ENCODE measurements at regions of chr1 and their contacts with region 1.

Region 1: DNA sequence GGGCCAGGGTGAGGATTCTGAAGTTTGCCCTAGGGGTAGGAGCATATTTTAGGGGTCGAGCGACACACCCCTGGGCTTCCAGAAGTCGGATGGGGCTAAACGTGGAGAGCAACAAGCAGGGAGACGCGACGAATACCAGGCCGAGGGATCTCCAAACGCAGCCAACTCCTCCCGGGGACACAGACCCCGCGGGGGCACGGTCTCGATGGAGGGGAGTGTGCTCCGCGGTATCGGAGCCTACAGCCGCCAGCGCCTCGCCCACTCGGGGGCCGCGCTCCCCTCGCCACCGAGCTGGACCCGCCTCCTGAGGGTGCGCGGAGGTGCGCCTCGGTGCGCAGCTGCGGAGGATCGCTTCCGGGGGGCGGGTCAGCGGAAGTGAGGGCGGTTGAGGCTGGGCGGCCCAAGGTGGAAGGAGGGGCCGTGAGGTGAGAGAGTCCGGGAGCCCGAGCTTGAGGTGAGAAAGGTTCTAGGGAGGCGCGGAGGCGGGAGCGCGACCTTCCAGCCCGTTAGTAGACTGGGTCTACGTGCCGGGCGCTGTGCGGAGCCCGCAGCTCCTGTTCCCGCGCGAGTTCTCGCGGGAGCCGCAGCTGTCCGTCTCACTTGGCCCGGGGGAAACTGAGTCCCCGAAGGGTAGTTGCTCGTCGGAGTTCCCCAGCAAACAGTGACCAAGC is at the start of gene MTFR1L:
- DNase-seq: peak; percentile 75 to 94 (median 85)
- H3K4me3 ChIP-seq: peak within 1 kb of the TSS; percentile 72 to 99 (median 95)
- H3K27ac ChIP-seq: peak within 1 kb of the TSS; percentile 52 to 98 (median 89)
- H3K27me3 ChIP-seq: no peaks in the 10 kb centered on the region
- CTCF ChIP-seq: peak in 17 of 56 donors; percentile 10 to 50 (median 26)
- total RNA-seq, gene MTFR1L: 66.5 to 116 (median 93.9) TPM

Region 2: DNA sequence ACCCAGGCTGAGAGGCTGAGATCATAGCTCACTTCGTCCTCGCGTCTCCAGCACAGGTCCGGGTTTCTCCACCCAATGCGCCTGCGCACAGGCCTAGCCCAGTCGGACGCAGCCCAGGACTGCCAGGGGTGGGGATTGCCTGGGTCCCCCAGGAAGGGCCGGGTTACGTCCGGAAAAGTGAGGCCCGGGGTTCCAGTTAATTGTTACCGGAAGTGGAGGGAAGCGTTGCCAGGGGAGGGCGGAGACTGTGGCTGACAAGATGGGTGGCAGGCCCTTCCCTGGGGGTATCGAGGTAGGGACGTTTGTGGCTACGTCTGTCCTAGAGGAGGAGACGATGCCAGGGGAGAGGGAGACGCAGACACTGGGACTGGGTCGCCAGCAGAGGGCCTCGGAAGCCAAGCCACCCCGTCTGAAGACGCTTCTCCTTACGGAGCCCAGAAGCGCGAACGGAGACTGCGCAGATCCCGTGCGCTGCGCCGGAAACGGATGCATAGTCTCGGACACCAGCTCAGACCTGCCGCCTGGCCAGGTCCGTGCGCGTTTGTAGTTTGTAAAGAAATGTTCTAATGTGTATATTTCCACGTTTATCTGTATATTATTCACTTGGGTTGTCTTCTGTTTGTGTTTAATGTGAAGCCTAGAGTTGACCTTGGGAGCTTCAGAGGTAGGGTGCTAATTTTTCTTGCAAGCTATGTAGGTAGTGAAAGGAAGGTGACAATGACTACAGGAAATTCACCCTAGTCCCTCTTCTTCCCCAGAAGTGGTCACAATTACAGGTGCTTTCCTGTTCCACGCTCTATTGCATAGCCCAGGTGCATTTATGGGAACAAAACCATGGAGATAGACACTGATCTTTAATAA is 579.8 kb before region 1 on chr1:
- intact Hi-C with region 1: loop called in 1 of 2 experiments (anchors 10 kb)
- DNase-seq: peak; percentile 79 to 92 (median 90)
- H3K4me3 ChIP-seq: peak overlapping the region; percentile 28 to 77 (median 59)
- H3K27ac ChIP-seq: peak overlapping the region; percentile 58 to 97 (median 90)
- H3K27me3 ChIP-seq: no peaks in the 10 kb centered on the region
- CTCF ChIP-seq: peak; percentile 39 to 86 (median 77)

Region 3: DNA sequence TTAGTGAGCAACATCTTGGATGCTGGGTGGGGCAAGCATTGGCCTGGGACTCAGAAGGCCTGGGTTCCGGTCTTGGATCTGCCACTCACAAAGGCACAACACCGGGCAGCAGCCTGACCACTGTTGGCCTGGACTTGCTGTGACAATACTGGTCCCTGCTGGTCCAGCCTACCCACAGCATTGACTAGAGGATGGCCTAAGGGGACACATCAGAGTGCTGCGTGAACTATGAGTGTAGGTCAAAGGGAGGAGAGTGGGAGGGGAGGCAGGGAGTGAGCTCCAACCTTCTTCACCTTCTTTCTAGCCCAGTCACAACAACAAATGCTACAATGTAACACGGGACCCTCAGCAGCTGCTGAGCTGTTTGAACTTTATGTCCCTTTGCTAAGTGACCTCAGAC is 450.5 kb before region 1 on chr1:
- intact Hi-C with region 1: no loop called
- DNase-seq: no peak
- H3K4me3 ChIP-seq: no peak overlapping the region
- H3K27ac ChIP-seq: no peak overlapping the region
- H3K27me3 ChIP-seq: no peaks in the 10 kb centered on the region
- CTCF ChIP-seq: no peak

Region 4: DNA sequence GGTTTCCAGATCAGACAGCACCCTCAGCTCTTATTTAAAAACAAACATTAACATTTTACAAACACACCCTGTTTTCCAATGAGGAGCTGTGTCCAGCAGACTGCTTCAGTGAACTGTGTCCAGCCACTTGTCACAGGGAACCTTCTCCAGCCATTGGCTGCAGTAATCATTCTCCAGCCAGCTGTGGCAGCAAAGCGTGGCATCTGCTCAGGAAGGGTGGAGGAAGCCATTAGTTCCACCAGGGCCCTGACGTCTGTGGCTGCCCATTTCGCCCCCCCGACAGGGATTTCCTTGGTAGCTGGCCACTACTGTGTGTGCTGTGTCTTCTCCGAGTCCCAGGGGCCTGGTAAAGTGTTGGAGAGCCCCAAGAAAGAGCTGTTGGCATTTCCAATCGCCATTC is 82.6 kb before region 1 on chr1:
- intact Hi-C with region 1: no loop called
- DNase-seq: peak in 4 of 10 donors; percentile 27 to 46 (median 33)
- H3K4me3 ChIP-seq: no peak overlapping the region
- H3K27ac ChIP-seq: peak overlapping the region in 1 of 59 donors; percentile 27
- H3K27me3 ChIP-seq: no peaks in the 10 kb centered on the region
- CTCF ChIP-seq: peak in 2 of 56 donors; percentile 12 to 15

Region 5: GRCh38 chr1:25874934-25875855 is 55.5 kb after region 1 on chr1 and contains the start of gene PAQR7:
- intact Hi-C with region 1: no loop called
- DNase-seq: peak; percentile 67 to 89 (median 82)
- H3K4me3 ChIP-seq: peak within 1 kb of the TSS; percentile 54 to 94 (median 79)
- H3K27ac ChIP-seq: peak within 1 kb of the TSS in 56 of 59 donors; percentile 58 to 94 (median 84)
- H3K27me3 ChIP-seq: no peaks in the 10 kb centered on the region
- CTCF ChIP-seq: peak in 8 of 56 donors; percentile 5 to 41 (median 13)
- total RNA-seq, gene PAQR7: 5.7 to 12.6 (median 9.3) TPM

Region 6: GRCh38 chr1:25997828-25998761 is 178.4 kb after region 1 on chr1 and contains the start of gene PAFAH2:
- intact Hi-C with region 1: loop called (anchors 5 kb)
- DNase-seq: peak; percentile 92 to 98 (median 96)
- H3K4me3 ChIP-seq: peak within 1 kb of the TSS; percentile 39 to 93 (median 77)
- H3K27ac ChIP-seq: peak within 1 kb of the TSS; percentile 47 to 95 (median 89)
- H3K27me3 ChIP-seq: no peaks in the 10 kb centered on the region
- CTCF ChIP-seq: peak; percentile 98 to 100 (median 99)
- total RNA-seq, gene PAFAH2: 3.7 to 19.3 (median 8.5) TPM

Region 7: GRCh38 chr1:26035959-26036755 is 216.4 kb after region 1 on chr1:
- intact Hi-C with region 1: no loop called
- DNase-seq: peak in 9 of 10 donors; percentile 74 to 89 (median 84)
- H3K4me3 ChIP-seq: peak overlapping the region; percentile 66 to 96 (median 83)
- H3K27ac ChIP-seq: peak overlapping the region in 51 of 59 donors; percentile 16 to 90 (median 77)
- H3K27me3 ChIP-seq: no peaks in the 10 kb centered on the region
- CTCF ChIP-seq: peak; percentile 92 to 100 (median 99)

Measured in dorsolateral prefrontal cortex (tissue), 120 donors.